ENCODE measurements at regions of chr14 and their contacts with region 1.

Region 1: DNA sequence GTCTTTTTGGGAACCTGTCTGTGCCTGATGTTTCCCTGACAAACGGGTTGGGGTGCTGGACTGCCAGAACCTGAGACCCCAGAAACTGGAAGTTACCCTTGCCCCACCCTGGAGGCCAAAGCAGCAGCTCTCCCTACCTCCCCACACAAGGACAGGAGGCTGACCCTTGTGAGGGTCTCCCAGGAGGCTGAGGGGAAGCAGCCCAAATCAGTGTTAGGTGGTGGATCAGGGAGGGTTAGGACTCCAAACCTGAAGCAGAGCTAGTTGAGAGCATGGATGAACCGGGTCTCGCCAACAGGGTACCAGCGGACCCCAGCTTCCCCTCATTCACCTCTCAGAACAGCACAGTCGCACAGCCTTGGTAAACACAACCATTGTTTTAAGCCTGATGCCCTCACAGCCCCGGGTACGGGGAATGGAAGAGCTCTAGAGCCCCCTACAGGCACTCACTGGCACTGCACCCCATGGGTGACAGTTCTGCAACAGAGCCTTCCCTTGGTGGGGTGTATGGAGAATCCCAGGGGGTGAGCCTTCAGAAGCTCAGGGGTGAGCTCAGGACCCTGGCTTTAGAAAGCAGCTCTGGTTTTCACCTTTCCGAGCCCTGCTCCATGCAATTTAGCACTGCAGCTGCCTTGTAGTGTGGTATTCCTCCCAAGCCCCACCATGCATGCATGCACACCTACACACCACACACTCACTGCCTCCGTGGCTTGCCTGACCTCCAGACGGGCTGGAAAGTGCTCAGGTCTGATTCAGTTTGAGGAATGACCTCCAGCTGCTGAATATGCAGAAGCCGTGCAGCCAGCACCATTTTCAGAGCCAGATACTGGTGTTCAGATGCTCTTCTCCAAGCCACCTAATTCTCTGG is 11.2 kb downstream of the ESRRB start:
- DNase-seq: peak; percentile 65 to 77 (median 76)
- ATAC-seq: peak; percentile 97
- H3K4me3 ChIP-seq: no peak overlapping the region
- H3K27ac ChIP-seq: no peak overlapping the region
- H3K4me1 ChIP-seq: no peaks in the 10 kb centered on the region; a peak in 1 of 5 replicates
- H3K27me3 ChIP-seq: no peaks in the 10 kb centered on the region
- CTCF ChIP-seq: peak; percentile 83 to 92 (median 84)
- EP300 ChIP-seq: no peak
- POLR2A ChIP-seq: no peak
- RAD21 ChIP-seq: peak; percentile 74 to 78

Region 2: DNA sequence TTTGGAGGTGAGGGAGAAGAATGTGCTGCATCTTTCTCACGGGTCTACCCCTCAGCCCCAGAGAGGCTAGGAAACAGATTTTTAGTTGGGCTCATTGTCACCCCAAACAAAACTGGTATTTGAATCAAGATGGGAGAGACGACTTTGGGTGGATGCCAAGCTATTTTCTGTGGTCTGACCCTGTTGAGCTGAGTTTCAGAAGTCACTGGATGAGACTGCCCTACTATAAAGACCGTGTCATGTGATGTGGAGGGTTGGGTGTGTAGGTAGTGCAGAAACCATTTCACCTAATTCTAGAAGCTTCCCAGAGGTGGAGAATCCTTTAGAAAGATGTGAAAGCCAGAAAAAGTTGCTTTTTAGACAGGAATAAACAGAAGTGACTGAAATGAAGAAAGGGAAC is 341.4 kb before region 1 on chr14:
- CTCF ChIA-PET with region 1: interaction called, 9 read pairs
- POLR2A ChIA-PET with region 1: no interaction called
- in situ Hi-C with region 1: loop called (anchors 10 kb)
- intact Hi-C with region 1: loop called (anchors 2 kb)
- DNase-seq: no peak
- ATAC-seq: no peak
- H3K4me3 ChIP-seq: no peak overlapping the region
- H3K27ac ChIP-seq: no peak overlapping the region
- H3K4me1 ChIP-seq: no peaks in the 10 kb centered on the region
- H3K27me3 ChIP-seq: peaks cover 0 to 6% of the 10 kb centered on the region in 2 experiments; a peak in 2 of 5 replicates
- CTCF ChIP-seq: no peak
- EP300 ChIP-seq: no peak
- POLR2A ChIP-seq: no peak
- RAD21 ChIP-seq: no peak

Region 3: GRCh38 chr14:76101377-76102010 is 285.7 kb before region 1 on chr14:
- CTCF ChIA-PET with region 1: no interaction called
- POLR2A ChIA-PET with region 1: no interaction called
- in situ Hi-C with region 1: no loop called
- intact Hi-C with region 1: loop called (anchors 5 kb)
- DNase-seq: no peak
- ATAC-seq: no peak
- H3K4me3 ChIP-seq: no peak overlapping the region
- H3K27ac ChIP-seq: no peak overlapping the region
- H3K4me1 ChIP-seq: peaks cover 0 to 7% of the 10 kb centered on the region in 2 experiments; a peak in 2 of 5 replicates
- H3K27me3 ChIP-seq: peaks cover 12 to 56% of the 10 kb centered on the region in 2 experiments; a peak in 4 of 5 replicates
- CTCF ChIP-seq: no peak
- EP300 ChIP-seq: no peak
- POLR2A ChIP-seq: no peak
- RAD21 ChIP-seq: no peak

Region 4: GRCh38 chr14:76647697-76648298 is 260.6 kb after region 1 on chr14:
- CTCF ChIA-PET with region 1: no interaction called
- POLR2A ChIA-PET with region 1: no interaction called
- in situ Hi-C with region 1: no loop called
- intact Hi-C with region 1: loop called (anchors 10 kb)
- DNase-seq: peak; percentile 53 to 61 (median 54)
- ATAC-seq: peak; percentile 93
- H3K4me3 ChIP-seq: no peak overlapping the region
- H3K27ac ChIP-seq: no peak overlapping the region
- H3K4me1 ChIP-seq: no peaks in the 10 kb centered on the region
- H3K27me3 ChIP-seq: peaks cover 6 to 31% of the 10 kb centered on the region in 2 experiments; a peak in 3 of 5 replicates
- CTCF ChIP-seq: peak; percentile 69 to 71 (median 70)
- EP300 ChIP-seq: no peak
- POLR2A ChIP-seq: no peak
- RAD21 ChIP-seq: peak; percentile 27 to 71; a peak in 3 of 4 replicates